Right lobe of liver (tissue), 6 donors: ENCODE measurements at regions of chr21 and their contacts with region 1.

Region 1: GRCh38 chr21:42818328-42818749 is 61.0 kb downstream of the WDR4 start:
- DNase-seq: peak; percentile 72 to 78 (median 74)
- ATAC-seq: peak; percentile 96 to 99 (median 98)
- H3K4me3 ChIP-seq: no peak overlapping the region
- H3K27ac ChIP-seq: no peak overlapping the region
- H3K4me1 ChIP-seq: no peaks in the 10 kb centered on the region
- H3K27me3 ChIP-seq: no peaks in the 10 kb centered on the region
- CTCF ChIP-seq: peak; percentile 94 to 98 (median 96)
- POLR2A ChIP-seq: no peak

Region 2: GRCh38 chr21:42593007-42593806 is 225.1 kb before region 1 on chr21:
- intact Hi-C with region 1: loop called (anchors 5 kb)
- DNase-seq: peak; percentile 80 to 88 (median 83)
- ATAC-seq: peak; percentile 95 to 97 (median 95)
- H3K4me3 ChIP-seq: peak overlapping the region in 2 of 3 donors; percentile 28 to 42
- H3K27ac ChIP-seq: peak overlapping the region in 2 of 3 donors; percentile 46 to 66
- H3K4me1 ChIP-seq: peaks cover 0 to 10% (median 0%) of the 10 kb centered on the region in 4 donors
- H3K27me3 ChIP-seq: no peaks in the 10 kb centered on the region
- CTCF ChIP-seq: peak; percentile 74 to 91 (median 82)
- POLR2A ChIP-seq: no peak

Region 3: DNA sequence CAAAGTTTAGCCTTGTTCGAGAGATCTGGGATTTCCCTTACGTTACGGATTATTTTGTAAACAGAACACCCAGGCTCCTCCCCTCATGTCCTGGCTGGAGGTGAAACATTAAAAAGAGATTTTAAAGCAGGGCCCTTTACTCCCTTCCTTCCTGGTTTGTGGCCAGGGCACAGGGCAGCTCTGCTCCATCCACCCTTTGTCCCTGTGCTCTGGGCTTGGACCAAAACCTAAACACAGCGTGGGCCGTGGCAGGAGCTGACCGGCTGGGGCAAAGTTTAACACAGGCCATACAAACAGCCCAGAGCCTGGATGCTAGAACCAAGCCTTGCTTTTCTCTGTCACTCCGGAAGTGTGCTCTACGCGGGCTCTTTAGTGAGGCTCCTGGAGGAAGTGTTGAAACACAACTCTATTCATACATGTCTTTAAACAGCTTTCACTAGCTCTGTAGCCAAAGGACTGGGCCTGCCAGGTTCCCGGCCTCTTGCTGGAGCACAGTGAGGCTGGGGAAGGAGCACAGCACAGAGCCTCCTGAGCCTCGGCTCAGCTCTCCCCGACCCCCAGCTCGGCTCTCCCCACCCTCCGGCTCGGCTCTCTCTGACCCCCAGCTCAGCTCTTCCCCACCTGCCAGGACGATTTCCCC is 80.3 kb before region 1 on chr21:
- intact Hi-C with region 1: no loop called
- DNase-seq: peak; percentile 88 to 97 (median 93)
- ATAC-seq: peak; percentile 83 to 90 (median 90)
- H3K4me3 ChIP-seq: no peak overlapping the region
- H3K27ac ChIP-seq: peak overlapping the region; percentile 58 to 86 (median 84)
- H3K4me1 ChIP-seq: peaks cover 0 to 50% (median 25%) of the 10 kb centered on the region in 4 donors
- H3K27me3 ChIP-seq: no peaks in the 10 kb centered on the region
- CTCF ChIP-seq: no peak
- POLR2A ChIP-seq: peak; percentile 53